CD8-positive, alpha-beta T cell (primary cell): ENCODE measurements at regions of chr19 and their contacts with region 1.

Region 1: DNA sequence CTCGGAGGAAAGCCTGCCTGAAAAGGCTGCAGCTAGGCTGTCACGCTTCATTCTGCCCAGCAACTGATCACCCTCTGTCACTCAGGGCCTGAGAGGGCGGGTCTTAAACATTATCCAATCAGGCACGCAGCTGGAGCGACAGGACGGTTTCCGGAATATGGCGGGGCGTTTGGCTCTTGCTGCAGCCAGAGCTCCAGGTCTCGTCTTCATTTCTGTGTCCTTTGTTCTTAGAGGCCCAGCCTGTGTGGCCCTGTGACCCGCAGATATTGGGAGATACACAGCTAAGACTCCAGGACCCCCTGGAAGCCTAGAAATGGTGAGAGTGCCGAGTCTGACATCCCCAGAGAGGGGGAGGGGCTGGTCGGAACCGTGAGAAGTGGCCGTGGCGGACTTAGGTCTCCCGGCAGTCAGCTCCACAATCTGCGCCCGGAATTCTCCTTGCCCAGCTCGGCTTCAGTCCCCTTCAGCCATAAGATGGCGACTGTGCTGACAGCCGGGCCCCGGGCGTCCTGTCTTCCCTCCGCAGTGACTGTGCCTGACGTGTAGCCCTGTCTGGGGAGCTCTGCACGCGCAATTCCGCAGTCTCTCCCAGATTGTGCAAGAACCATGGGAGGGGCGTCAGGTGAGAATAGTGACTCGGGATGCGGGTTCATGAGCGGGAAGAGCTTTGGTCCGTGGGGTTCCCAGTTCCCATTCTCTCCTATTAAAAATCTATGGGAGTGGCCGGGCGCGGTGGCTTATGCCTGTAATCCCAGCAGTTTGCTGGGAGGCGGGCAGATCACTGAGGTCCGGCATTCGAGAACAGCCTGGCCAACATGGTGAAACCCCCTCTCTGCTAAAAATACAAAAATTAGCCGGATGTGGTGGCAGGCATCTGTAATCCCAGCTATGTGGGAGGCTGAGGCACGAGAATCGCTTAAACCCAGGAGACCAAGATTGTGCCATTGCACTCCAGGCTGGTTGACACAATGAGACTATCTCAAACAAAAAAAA is at the start of gene ZNF429:
- DNase-seq: peak; percentile 81 to 96 (median 91)
- ATAC-seq: peak; percentile 98
- H3K4me3 ChIP-seq: peak within 1 kb of the TSS; percentile 75 to 78
- H3K4me3 Mint-ChIP-seq: peak within 1 kb of the TSS; percentile 100
- H3K27ac ChIP-seq: peak within 1 kb of the TSS; percentile 92 to 95
- H3K27ac Mint-ChIP-seq: peak within 1 kb of the TSS; percentile 100
- H3K4me1 ChIP-seq: peaks cover 24% of the 10 kb centered on the region
- H3K4me1 Mint-ChIP-seq: peaks cover 52% of the 10 kb centered on the region
- H3K27me3 ChIP-seq: no peaks in the 10 kb centered on the region
- H3K27me3 Mint-ChIP-seq: no peaks in the 10 kb centered on the region
- CTCF ChIP-seq: no peak
- total RNA-seq, gene ZNF429: 9.6 to 11.2 TPM

Region 2: GRCh38 chr19:20039203-20039723 is 1466.5 kb before region 1 on chr19 and contains the start of gene ZNF682:
- CTCF ChIA-PET with region 1: no interaction called
- POLR2A ChIA-PET with region 1: no interaction called
- intact Hi-C with region 1: loop called in 1 of 2 experiments (anchors 10 kb)
- DNase-seq: peak; percentile 87 to 97 (median 95)
- ATAC-seq: peak; percentile 99
- H3K4me3 ChIP-seq: peak within 1 kb of the TSS; percentile 71 to 72
- H3K4me3 Mint-ChIP-seq: peak within 1 kb of the TSS; percentile 98
- H3K27ac ChIP-seq: peak within 1 kb of the TSS; percentile 60 to 68
- H3K27ac Mint-ChIP-seq: peak within 1 kb of the TSS; percentile 96
- H3K4me1 ChIP-seq: peaks cover 13% of the 10 kb centered on the region
- H3K4me1 Mint-ChIP-seq: peaks cover 20% of the 10 kb centered on the region
- H3K27me3 ChIP-seq: no peaks in the 10 kb centered on the region
- H3K27me3 Mint-ChIP-seq: peaks cover 2% of the 10 kb centered on the region
- CTCF ChIP-seq: no peak
- total RNA-seq, gene ZNF682: 13.3 to 16.0 TPM

Region 3: DNA sequence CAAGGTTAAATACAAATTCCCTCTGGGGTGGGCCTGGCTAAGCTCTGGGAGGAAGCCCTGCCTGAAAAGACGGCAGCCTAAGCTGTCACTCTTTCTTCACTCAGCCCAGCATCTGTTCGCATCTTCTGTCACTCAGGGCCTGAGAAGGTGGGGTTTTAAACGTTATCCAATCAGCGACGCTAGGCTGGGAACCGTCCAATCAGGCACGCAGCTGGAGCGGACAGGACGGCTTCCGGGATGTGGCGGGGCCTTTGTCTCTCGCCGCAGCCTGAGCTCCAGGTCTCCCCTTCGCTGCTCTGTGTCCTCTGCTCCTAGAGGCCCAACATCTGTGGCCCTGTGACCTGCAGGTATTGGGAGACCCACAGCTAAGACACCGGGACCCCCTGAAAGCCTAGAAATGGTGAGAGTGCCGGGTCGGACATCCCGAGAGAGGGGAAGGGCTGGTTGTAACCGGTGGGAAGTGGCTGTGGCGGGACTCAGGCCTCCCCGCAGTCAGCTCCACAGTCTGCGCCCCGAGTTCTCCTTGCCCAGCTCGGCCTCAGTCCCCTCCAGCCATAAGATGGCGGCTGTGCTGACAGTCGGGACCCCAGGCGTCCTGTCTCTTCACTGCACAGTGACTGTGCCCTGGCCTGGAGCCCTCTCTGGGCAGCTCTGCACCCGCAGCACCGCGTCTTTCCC is 363.8 kb before region 1 on chr19 and contains the start of gene ZNF431:
- CTCF ChIA-PET with region 1: no interaction called
- POLR2A ChIA-PET with region 1: interaction called, 9 read pairs
- intact Hi-C with region 1: loop called (anchors 2 to 5 kb)
- DNase-seq: peak; percentile 79 to 96 (median 88)
- ATAC-seq: peak; percentile 99
- H3K4me3 ChIP-seq: peak within 1 kb of the TSS; percentile 68 to 90
- H3K4me3 Mint-ChIP-seq: peak within 1 kb of the TSS; percentile 97
- H3K27ac ChIP-seq: peak within 1 kb of the TSS; percentile 65 to 85
- H3K27ac Mint-ChIP-seq: peak within 1 kb of the TSS; percentile 97
- H3K4me1 ChIP-seq: peaks cover 9% of the 10 kb centered on the region
- H3K4me1 Mint-ChIP-seq: peaks cover 46% of the 10 kb centered on the region
- H3K27me3 ChIP-seq: no peaks in the 10 kb centered on the region
- H3K27me3 Mint-ChIP-seq: no peaks in the 10 kb centered on the region
- CTCF ChIP-seq: no peak
- total RNA-seq, gene ZNF431: 31.2 to 32.4 TPM

Region 4: GRCh38 chr19:21233691-21234090 is 272.1 kb before region 1 on chr19:
- CTCF ChIA-PET with region 1: no interaction called
- POLR2A ChIA-PET with region 1: no interaction called
- intact Hi-C with region 1: no loop called
- DNase-seq: no peak
- ATAC-seq: no peak
- H3K4me3 ChIP-seq: no peak overlapping the region
- H3K4me3 Mint-ChIP-seq: no peak overlapping the region
- H3K27ac ChIP-seq: no peak overlapping the region
- H3K27ac Mint-ChIP-seq: no peak overlapping the region
- H3K4me1 ChIP-seq: no peaks in the 10 kb centered on the region
- H3K4me1 Mint-ChIP-seq: no peaks in the 10 kb centered on the region
- H3K27me3 ChIP-seq: no peaks in the 10 kb centered on the region
- H3K27me3 Mint-ChIP-seq: no peaks in the 10 kb centered on the region
- CTCF ChIP-seq: no peak

Region 5: DNA sequence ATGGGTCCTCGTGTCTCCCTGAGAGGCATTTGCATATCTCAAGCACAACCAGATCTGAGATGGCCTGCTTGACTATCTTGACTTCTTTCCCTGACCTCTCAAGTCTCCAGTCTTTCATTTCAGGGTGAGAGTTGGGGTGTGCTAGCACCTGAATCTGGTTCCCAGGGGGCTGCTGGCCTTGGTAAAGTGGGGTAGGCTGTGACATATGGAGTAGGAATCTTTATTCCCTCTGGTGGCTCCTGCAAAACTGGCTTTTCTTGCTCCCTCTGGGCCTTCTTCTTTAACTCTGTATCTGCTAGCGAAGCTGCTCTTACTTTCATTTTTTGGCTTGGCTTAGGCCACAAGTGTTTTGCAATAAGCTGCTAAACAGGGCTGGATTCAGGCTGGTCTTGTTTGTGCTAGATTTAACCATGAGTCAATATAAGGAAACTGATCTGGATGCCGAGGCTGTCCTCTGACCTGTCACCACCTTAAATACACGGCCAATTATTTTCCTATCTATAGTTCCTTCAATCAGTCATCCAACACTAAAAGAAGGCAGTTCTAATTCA is 66.5 kb before region 1 on chr19:
- CTCF ChIA-PET with region 1: no interaction called
- POLR2A ChIA-PET with region 1: no interaction called
- intact Hi-C with region 1: no loop called
- DNase-seq: no peak
- ATAC-seq: no peak
- H3K4me3 ChIP-seq: no peak overlapping the region
- H3K4me3 Mint-ChIP-seq: no peak overlapping the region
- H3K27ac ChIP-seq: no peak overlapping the region
- H3K27ac Mint-ChIP-seq: no peak overlapping the region
- H3K4me1 ChIP-seq: no peaks in the 10 kb centered on the region
- H3K4me1 Mint-ChIP-seq: no peaks in the 10 kb centered on the region
- H3K27me3 ChIP-seq: no peaks in the 10 kb centered on the region
- H3K27me3 Mint-ChIP-seq: no peaks in the 10 kb centered on the region
- CTCF ChIP-seq: no peak

Region 6: GRCh38 chr19:21482863-21483276 is 22.9 kb before region 1 on chr19:
- CTCF ChIA-PET with region 1: interaction called, 14 read pairs
- POLR2A ChIA-PET with region 1: interaction called, 4 read pairs
- intact Hi-C with region 1: no loop called
- DNase-seq: peak; percentile 16 to 83 (median 67)
- ATAC-seq: peak; percentile 81
- H3K4me3 ChIP-seq: peak overlapping the region in 1 of 2 experiments; percentile 40
- H3K4me3 Mint-ChIP-seq: no peak overlapping the region
- H3K27ac ChIP-seq: no peak overlapping the region
- H3K27ac Mint-ChIP-seq: no peak overlapping the region
- H3K4me1 ChIP-seq: no peaks in the 10 kb centered on the region
- H3K4me1 Mint-ChIP-seq: no peaks in the 10 kb centered on the region
- H3K27me3 ChIP-seq: no peaks in the 10 kb centered on the region
- H3K27me3 Mint-ChIP-seq: no peaks in the 10 kb centered on the region
- CTCF ChIP-seq: peak; percentile 78

Region 7: GRCh38 chr19:21586311-21587116 is 80.8 kb after region 1 on chr19:
- CTCF ChIA-PET with region 1: interaction called, 4 read pairs
- POLR2A ChIA-PET with region 1: interaction called, 34 read pairs
- intact Hi-C with region 1: loop called (anchors 1 to 5 kb)
- DNase-seq: peak in 6 of 9 experiments; percentile 23 to 58 (median 38)
- ATAC-seq: peak; percentile 67
- H3K4me3 ChIP-seq: peak overlapping the region; percentile 41 to 54
- H3K4me3 Mint-ChIP-seq: peak overlapping the region; percentile 86
- H3K27ac ChIP-seq: no peak overlapping the region
- H3K27ac Mint-ChIP-seq: peak overlapping the region; percentile 80
- H3K4me1 ChIP-seq: peaks cover 28% of the 10 kb centered on the region
- H3K4me1 Mint-ChIP-seq: peaks cover 45% of the 10 kb centered on the region
- H3K27me3 ChIP-seq: peaks cover 0 to 3% of the 10 kb centered on the region in 2 experiments
- H3K27me3 Mint-ChIP-seq: no peaks in the 10 kb centered on the region
- CTCF ChIP-seq: no peak

Region 8: GRCh38 chr19:21698215-21698614 is 192.5 kb after region 1 on chr19:
- CTCF ChIA-PET with region 1: no interaction called
- POLR2A ChIA-PET with region 1: no interaction called
- intact Hi-C with region 1: no loop called
- DNase-seq: peak in 2 of 9 experiments; percentile 34 to 61
- ATAC-seq: peak; percentile 57
- H3K4me3 ChIP-seq: no peak overlapping the region
- H3K4me3 Mint-ChIP-seq: no peak overlapping the region
- H3K27ac ChIP-seq: no peak overlapping the region
- H3K27ac Mint-ChIP-seq: no peak overlapping the region
- H3K4me1 ChIP-seq: no peaks in the 10 kb centered on the region
- H3K4me1 Mint-ChIP-seq: no peaks in the 10 kb centered on the region
- H3K27me3 ChIP-seq: no peaks in the 10 kb centered on the region
- H3K27me3 Mint-ChIP-seq: no peaks in the 10 kb centered on the region
- CTCF ChIP-seq: peak; percentile 78

Region 9: GRCh38 chr19:21835810-21836444 is 330.2 kb after region 1 on chr19 and contains the start of gene ZNF43:
- CTCF ChIA-PET with region 1: no interaction called
- POLR2A ChIA-PET with region 1: interaction called, 19 read pairs
- intact Hi-C with region 1: loop called in 1 of 2 experiments (anchors 1 kb)
- DNase-seq: peak; percentile 85 to 96 (median 93)
- ATAC-seq: peak; percentile 97
- H3K4me3 ChIP-seq: peak within 1 kb of the TSS; percentile 84 to 85
- H3K4me3 Mint-ChIP-seq: peak within 1 kb of the TSS; percentile 98
- H3K27ac ChIP-seq: peak within 1 kb of the TSS; percentile 75 to 84
- H3K27ac Mint-ChIP-seq: peak within 1 kb of the TSS; percentile 97
- H3K4me1 ChIP-seq: peaks cover 9% of the 10 kb centered on the region
- H3K4me1 Mint-ChIP-seq: peaks cover 34% of the 10 kb centered on the region
- H3K27me3 ChIP-seq: no peaks in the 10 kb centered on the region
- H3K27me3 Mint-ChIP-seq: no peaks in the 10 kb centered on the region
- CTCF ChIP-seq: no peak
- total RNA-seq, gene ZNF43: 29.9 to 31.8 TPM